ENCODE measurements at regions of chr15 and their contacts with region 1.

Region 1: DNA sequence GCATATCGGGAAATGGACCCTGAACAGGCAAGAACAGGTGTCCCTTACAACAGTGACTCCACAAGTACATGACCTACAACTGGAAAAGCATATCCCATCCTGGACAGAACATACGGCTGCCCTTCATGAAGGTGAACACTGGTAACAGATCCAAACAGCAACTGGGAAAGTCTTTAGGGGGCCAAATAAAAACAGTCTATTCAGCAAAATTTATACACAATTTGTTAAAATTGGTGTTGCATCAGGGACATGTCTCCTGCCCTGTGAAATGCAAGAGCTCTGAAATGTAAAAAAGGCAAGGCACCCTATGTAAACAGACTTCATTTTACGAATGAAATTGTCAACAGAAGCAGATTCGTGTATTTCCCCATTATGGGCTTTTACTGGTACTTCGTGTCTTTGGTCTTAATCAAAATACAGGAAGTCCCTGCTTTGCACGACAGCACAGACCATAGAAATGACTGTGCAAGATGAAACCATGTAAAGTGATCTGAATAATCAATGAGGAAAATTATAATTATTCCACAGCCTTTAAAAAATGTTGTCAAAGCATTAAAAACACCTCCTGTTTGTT is 127.3 kb upstream of the THBS1 start:
- DNase-seq: no peak
- ATAC-seq: no peak
- H3K4me3 ChIP-seq: no peak overlapping the region
- H3K27ac ChIP-seq: no peak overlapping the region
- H3K4me1 ChIP-seq: peaks cover 0 to 15% of the 10 kb centered on the region in 2 experiments; a peak in 3 of 5 replicates
- H3K27me3 ChIP-seq: no peaks in the 10 kb centered on the region; a peak in 1 of 5 replicates
- CTCF ChIP-seq: no peak
- EP300 ChIP-seq: no peak
- POLR2A ChIP-seq: no peak
- RAD21 ChIP-seq: no peak

Region 2: GRCh38 chr15:39511000-39511915 is 57.7 kb after region 1 on chr15:
- CTCF ChIA-PET with region 1: no interaction called
- POLR2A ChIA-PET with region 1: no interaction called
- in situ Hi-C with region 1: no loop called
- intact Hi-C with region 1: loop called (anchors 10 kb)
- DNase-seq: peak; percentile 16 to 55 (median 31)
- ATAC-seq: peak; percentile 88
- H3K4me3 ChIP-seq: no peak overlapping the region
- H3K27ac ChIP-seq: no peak overlapping the region
- H3K4me1 ChIP-seq: peaks cover 11 to 21% of the 10 kb centered on the region in 2 experiments; a peak in 4 of 5 replicates
- H3K27me3 ChIP-seq: no peaks in the 10 kb centered on the region
- CTCF ChIP-seq: no peak
- EP300 ChIP-seq: no peak
- POLR2A ChIP-seq: no peak
- RAD21 ChIP-seq: no peak

Region 3: DNA sequence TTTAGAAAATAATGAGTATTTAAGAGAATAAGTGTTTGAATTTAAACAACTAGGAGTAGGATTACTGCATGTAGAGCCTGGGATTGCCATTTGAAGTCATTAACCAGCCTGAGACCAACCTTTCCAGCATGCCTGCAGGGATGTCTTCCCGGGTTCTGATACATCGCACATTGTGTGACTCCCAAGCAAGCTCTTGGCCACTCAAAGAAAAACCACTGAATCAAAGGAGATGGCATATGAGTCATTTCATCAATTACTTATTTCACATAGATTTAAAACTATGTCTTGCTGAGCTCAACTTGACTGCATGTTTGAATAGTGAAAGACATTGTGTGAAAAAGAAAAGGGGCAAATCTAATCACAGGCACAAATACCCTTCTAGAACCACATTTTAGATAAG is 112.3 kb after region 1 on chr15:
- CTCF ChIA-PET with region 1: no interaction called
- POLR2A ChIA-PET with region 1: no interaction called
- in situ Hi-C with region 1: no loop called
- intact Hi-C with region 1: loop called (anchors 10 kb)
- DNase-seq: no peak
- ATAC-seq: no peak
- H3K4me3 ChIP-seq: no peak overlapping the region
- H3K27ac ChIP-seq: no peak overlapping the region
- H3K4me1 ChIP-seq: no peaks in the 10 kb centered on the region; a peak in 1 of 5 replicates
- H3K27me3 ChIP-seq: peaks cover 16 to 29% of the 10 kb centered on the region in 2 experiments
- CTCF ChIP-seq: no peak
- EP300 ChIP-seq: no peak
- POLR2A ChIP-seq: no peak
- RAD21 ChIP-seq: no peak

Measured in K562 (cell line).